ENCODE measurements at regions of chr3 and their contacts with region 1.

Region 1: GRCh38 chr3:24494618-24495325 is at the start of gene THRB:
- DNase-seq: peak; percentile 89 to 94
- ATAC-seq: peak; percentile 82
- H3K4me3 ChIP-seq: peak within 1 kb of the TSS; percentile 76 to 78
- H3K27ac ChIP-seq: peak within 1 kb of the TSS; percentile 74 to 93
- H3K4me1 ChIP-seq: peaks cover 10% of the 10 kb centered on the region in 2 donors
- H3K27me3 ChIP-seq: no peaks in the 10 kb centered on the region
- total RNA-seq, gene THRB: 59.7 to 77.9 TPM

Region 2: DNA sequence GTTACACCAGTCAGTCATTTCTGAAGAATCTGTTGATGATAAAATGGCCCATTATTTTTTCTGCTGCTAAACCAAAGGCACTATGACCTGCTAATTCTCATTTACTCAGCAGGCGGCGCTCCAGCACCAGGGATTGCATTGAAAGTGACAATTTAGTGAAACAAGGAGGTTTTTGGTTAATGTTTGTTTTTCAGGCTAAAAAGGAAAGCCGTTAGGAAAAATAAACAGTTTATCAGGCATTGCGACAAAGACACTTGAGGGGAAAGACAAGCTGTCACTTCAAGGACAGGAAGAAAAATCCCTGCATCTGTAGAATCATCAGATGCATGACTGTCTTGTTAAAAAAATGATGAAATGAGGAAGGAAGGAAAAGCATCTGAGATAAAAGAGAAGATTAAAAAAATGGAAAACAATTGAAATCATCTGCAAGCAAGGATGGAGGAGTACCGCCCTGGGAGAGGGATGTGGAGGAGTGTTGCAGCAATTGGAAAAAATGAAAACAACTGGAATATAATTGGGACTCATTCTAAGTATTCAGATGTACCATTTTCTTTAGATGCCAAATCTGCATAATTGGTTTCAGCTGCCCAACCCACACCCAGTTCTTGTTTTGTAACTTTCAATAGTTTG is 495.6 kb before region 1 on chr3:
- intact Hi-C with region 1: loop called in 1 of 2 experiments (anchors 10 kb)
- DNase-seq: peak; percentile 76 to 91
- ATAC-seq: peak; percentile 66
- H3K4me3 ChIP-seq: no peak overlapping the region
- H3K27ac ChIP-seq: no peak overlapping the region
- H3K4me1 ChIP-seq: peaks cover 0 to 5% of the 10 kb centered on the region in 2 donors
- H3K27me3 ChIP-seq: no peaks in the 10 kb centered on the region

Region 3: GRCh38 chr3:24264748-24265158 is 230.0 kb before region 1 on chr3:
- intact Hi-C with region 1: loop called (anchors 5 kb)
- DNase-seq: no peak
- ATAC-seq: peak; percentile 66
- H3K4me3 ChIP-seq: no peak overlapping the region
- H3K27ac ChIP-seq: no peak overlapping the region
- H3K4me1 ChIP-seq: peaks cover 1 to 3% of the 10 kb centered on the region in 2 donors
- H3K27me3 ChIP-seq: no peaks in the 10 kb centered on the region

Region 4: GRCh38 chr3:24343084-24343783 is 151.5 kb before region 1 on chr3:
- intact Hi-C with region 1: no loop called
- DNase-seq: no peak
- ATAC-seq: no peak
- H3K4me3 ChIP-seq: no peak overlapping the region
- H3K27ac ChIP-seq: peak overlapping the region in 1 of 2 donors; percentile 14
- H3K4me1 ChIP-seq: peaks cover 1 to 18% of the 10 kb centered on the region in 2 donors
- H3K27me3 ChIP-seq: no peaks in the 10 kb centered on the region

Region 5: DNA sequence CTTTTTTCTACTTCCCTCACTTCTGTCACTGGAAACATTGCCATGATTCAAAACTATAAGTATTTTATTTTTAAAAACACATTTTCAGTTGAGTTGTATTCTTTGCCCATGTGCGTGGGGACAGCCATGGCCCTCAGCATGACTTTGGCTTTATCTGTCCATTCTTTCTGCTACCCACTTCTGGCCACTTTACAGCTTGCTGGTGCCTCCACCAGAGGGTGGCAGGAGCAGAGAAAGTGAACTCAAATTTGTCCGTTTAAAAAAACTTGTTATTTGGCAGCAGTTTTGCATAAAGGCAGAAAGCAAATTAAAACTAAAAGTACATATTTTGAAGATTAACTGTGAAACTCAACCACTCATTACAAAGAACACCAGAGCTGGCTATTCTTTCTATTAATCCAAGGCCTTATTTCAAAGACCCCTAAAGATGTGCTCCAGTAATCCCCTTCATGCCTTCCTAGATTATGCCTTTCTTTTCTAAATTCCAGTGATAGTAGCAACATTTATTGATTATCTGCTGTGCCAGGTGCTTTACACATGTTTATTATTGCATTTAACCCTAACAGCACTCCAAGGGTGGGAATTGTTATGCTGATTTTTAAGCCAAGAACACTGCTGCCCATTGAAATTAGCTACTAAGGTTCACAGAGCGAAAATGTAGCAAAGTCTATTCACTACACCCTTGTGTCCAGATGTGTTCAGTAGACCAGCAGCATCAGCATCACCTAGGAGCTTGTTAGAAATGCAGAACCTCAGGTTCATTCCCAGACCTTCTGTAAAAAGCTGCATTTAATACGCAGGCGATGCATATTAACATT is 134.9 kb before region 1 on chr3:
- intact Hi-C with region 1: loop called (anchors 5 kb)
- DNase-seq: no peak
- ATAC-seq: no peak
- H3K4me3 ChIP-seq: no peak overlapping the region
- H3K27ac ChIP-seq: peak overlapping the region; percentile 57 to 60
- H3K4me1 ChIP-seq: peaks cover 13 to 20% of the 10 kb centered on the region in 2 donors
- H3K27me3 ChIP-seq: no peaks in the 10 kb centered on the region

Region 6: DNA sequence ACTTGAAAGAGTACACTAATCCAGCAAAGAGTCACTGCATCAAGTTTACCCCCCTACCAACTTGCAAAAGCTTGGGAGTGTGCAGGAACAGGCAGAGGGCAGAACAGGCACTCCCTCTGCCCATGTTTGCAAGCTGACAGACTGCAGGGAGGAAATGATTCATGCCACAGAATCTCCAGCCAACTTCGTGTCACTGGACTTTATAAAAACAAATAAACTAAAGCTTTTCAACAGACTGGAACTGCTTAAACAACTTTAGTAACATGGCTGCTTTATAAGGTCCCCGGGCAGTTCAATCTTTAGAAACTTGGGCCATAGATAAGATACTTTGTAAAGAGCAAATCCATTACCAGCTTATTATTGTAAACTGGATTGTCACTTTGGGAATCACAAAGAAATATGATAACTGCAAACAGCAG is 129.6 kb before region 1 on chr3:
- intact Hi-C with region 1: loop called (anchors 5 kb)
- DNase-seq: peak in 1 of 2 donors; percentile 72
- ATAC-seq: peak; percentile 83
- H3K4me3 ChIP-seq: no peak overlapping the region
- H3K27ac ChIP-seq: peak overlapping the region in 1 of 2 donors; percentile 37
- H3K4me1 ChIP-seq: peaks cover 6 to 17% of the 10 kb centered on the region in 2 donors
- H3K27me3 ChIP-seq: no peaks in the 10 kb centered on the region

Region 7: GRCh38 chr3:24401090-24401810 is 93.5 kb before region 1 on chr3:
- intact Hi-C with region 1: loop called in 1 of 2 experiments (anchors 5 kb)
- DNase-seq: peak in 1 of 2 donors; percentile 42
- ATAC-seq: peak; percentile 79
- H3K4me3 ChIP-seq: no peak overlapping the region
- H3K27ac ChIP-seq: no peak overlapping the region
- H3K4me1 ChIP-seq: peaks cover 4 to 6% of the 10 kb centered on the region in 2 donors
- H3K27me3 ChIP-seq: no peaks in the 10 kb centered on the region

Region 8: DNA sequence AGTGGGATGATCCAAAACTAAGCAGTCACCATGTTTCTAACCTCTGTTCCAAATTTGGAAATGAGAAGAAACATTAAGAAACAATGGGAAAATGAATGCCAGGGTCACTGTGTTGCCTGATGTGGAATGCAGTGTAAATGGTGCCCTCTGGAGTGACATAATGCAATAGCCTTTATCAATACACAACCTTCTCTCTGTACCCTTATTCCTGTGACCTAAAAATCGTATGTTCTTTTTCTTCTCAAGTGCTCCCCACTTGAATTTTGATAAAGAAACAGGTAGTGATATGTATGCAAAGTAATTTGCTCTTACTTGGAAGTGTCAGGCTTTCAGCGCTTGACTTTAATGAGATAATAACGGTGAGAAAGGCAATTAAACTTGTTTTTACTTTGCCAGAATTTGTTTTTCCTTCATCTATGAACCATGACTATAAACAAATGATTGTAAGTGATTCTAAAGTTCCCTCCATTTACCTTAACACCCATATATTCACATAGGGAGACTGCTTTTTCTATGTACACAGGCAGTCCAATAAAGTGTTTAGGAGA is 145.6 kb after region 1 on chr3:
- intact Hi-C with region 1: loop called in 1 of 2 experiments (anchors 5 kb)
- DNase-seq: no peak
- ATAC-seq: peak; percentile 83
- H3K4me3 ChIP-seq: no peak overlapping the region
- H3K27ac ChIP-seq: no peak overlapping the region
- H3K4me1 ChIP-seq: peaks cover 0 to 4% of the 10 kb centered on the region in 2 donors
- H3K27me3 ChIP-seq: no peaks in the 10 kb centered on the region